ENCODE measurements at regions of chr6 and their contacts with region 1.

Region 1: DNA sequence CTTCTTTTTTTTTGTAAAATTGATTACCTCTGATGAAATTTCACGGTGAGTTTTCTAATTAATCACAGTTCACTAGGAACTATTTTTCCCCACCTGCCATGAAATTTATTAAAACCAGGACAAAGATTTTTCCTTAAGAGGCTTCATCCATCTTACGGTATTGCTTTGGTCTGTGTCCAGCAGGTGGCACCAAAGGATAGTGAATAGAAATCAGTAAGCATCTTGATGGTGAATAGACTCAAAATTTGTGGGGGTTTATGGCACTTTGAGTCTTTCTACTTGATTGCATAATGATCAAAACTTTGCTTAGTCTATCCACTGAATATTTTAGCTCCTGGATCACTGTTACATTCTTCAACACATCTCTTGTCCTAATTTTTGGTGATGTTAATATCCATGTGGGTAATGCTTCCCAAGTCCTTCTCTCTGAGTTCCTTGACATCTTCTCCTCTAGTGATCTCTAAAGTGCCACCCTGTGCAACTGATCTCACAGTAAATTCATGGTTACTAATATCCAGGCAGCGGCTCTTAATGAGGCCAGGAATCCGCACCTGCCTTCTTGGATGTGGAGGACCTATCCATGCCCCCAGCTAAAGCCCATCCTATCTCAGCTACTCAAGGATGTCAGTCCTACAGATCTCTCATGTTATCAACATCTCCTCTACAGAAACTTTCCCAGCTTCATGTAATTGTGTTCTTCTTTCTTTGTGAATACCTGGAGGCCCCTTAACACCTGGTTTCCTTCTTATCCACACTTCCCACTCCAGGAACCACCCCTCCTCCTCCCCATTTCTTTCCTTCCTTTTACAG is 54.5 kb downstream of the STMND1 start:
- DNase-seq: peak in 1 of 2 donors; percentile 55
- H3K4me3 ChIP-seq: no peak overlapping the region
- H3K27ac ChIP-seq: no peak overlapping the region
- H3K4me1 ChIP-seq: no peaks in the 10 kb centered on the region
- H3K27me3 ChIP-seq: no peaks in the 10 kb centered on the region
- CTCF ChIP-seq: peak; percentile 53 to 82 (median 77)
- POLR2A ChIP-seq: no peak

Region 2: DNA sequence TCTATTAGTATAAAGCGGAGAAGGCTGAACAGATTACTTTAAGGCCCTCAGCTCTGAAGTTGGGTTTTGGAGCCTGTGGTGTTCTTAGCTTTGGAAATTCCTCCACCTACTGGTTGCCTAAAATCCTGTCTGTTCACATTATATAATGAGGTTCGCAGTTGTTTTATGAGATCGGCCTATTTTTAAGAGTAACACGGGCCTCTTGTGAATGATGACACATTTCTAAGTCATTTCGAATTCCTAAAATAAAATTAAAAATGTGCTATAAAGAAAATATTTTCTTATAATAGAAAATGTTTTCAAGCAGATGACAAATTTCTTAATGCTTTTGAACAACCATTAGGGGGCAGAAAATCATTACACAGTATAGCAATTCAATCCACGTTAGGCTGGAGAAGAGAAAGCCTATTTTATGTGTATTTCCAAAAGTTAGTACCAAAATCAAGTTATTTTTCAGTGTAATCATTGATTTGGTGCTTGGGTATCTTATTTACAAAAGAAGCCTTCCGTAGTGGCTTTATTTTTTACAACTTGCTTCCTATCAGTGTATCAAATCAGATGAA is 428.0 kb after region 1 on chr6:
- intact Hi-C with region 1: loop called (anchors 10 kb)
- DNase-seq: no peak
- H3K4me3 ChIP-seq: peak overlapping the region in 2 of 3 donors; percentile 16 to 27
- H3K27ac ChIP-seq: peak overlapping the region; percentile 60 to 62
- H3K4me1 ChIP-seq: no peaks in the 10 kb centered on the region
- H3K27me3 ChIP-seq: no peaks in the 10 kb centered on the region
- CTCF ChIP-seq: peak; percentile 68 to 94 (median 88)
- POLR2A ChIP-seq: no peak

Region 3: DNA sequence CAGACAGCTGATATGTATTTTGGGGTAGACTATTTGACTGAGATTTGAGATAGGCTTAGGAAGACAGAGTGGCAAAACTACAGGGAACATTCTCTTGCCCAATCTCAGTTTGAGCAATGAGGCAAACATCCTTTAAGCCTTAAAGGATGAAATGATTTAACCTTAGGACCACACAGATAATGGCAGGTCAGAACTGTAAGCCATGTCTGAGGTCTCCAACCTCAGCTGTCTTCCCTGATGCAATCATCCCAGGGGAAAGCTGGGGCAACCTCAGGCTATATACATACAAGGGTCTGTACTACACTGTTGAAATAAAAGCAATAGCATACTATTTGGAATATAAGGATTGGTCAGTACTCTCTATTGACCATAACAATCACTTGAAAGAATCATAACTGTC is 634.2 kb after region 1 on chr6:
- intact Hi-C with region 1: loop called (anchors 10 kb)
- DNase-seq: no peak
- H3K4me3 ChIP-seq: no peak overlapping the region
- H3K27ac ChIP-seq: no peak overlapping the region
- H3K4me1 ChIP-seq: no peaks in the 10 kb centered on the region
- H3K27me3 ChIP-seq: no peaks in the 10 kb centered on the region
- CTCF ChIP-seq: no peak
- POLR2A ChIP-seq: no peak

Measured in breast epithelium (tissue), 4 donors.